ENCODE measurements at regions of chr3 and their contacts with region 1.

Region 1: DNA sequence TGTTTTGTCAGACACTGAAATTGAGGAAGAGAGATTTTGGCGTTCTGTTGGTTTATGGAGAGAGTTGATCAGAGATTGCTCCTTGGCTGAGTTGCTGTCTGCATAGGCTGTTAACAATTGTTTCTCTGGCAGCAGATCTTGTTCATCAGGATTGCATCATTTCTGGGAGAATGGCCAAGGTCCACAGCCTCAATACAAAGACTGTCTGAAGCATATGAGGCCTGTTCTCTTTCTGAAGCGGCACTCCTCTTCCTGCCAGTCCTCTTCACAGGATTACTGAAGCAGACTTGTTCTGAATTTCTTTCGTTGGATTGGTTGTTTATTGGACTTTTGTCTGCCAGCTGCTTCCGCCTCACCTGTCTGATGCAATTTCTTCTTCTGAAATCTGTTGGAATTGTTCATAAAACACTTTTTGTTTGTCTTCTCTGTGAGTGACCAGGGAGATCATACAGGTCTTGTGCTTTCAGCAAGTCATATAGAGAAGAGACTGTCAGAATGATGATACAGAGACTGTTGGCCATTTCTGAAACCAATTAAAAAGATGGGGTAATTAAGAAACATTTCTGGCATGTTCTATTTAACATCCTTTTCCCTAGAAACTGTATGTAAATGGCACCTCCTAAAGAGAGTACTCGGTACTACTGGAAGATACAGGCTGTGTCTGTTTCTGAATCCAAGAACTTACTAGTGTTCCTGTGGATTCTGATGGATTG is 25.5 kb downstream of the SETD5 start:
- DNase-seq: peak; percentile 48
- ATAC-seq: peak; percentile 96

Region 2: DNA sequence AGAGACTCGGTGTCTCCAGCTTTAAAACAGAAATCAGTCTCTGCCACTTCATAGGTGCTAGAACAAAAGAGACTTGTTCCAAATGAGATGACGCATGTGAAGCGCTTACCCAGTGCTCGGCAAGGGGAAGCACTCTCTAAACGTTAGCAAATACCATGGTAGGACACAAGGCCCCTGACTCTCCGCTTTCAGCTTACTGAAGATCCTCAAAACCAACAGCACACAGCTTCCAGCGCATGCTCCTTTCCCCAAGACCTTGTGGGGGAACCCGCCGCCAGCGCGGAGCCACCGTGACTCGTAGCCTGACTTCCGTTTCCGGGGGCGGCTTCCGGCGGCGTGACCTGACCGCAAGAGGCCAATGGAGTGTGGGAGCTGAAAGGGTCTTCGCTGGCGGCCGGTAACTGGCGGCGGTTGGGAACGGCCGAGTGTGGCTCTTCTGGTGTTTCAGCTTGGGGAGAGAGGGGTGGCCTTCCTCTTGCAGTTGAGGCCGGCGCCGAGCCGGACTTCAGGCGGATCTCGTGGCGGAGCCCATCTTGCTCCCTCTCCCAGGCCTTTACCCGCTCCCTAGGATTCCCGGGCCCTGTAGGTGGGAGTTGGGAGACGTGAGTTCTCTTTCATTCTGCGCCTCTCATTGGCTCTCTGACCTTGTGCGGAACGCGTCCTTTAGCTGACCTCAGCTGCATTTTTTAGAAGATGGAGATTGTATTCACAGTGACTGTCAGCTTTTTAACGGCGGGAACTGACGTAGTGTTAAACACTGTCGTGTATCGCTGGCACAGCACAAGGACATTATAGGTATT is 59.9 kb before region 1 on chr3 and contains the start of gene THUMPD3:
- intact Hi-C with region 1: loop called (anchors 5 kb)
- DNase-seq: peak; percentile 96
- ATAC-seq: peak; percentile 100
- total RNA-seq, gene THUMPD3: 52.9 TPM

Region 3: GRCh38 chr3:10041034-10041433 is 618.2 kb after region 1 on chr3:
- intact Hi-C with region 1: no loop called
- DNase-seq: no peak
- ATAC-seq: no peak